ENCODE measurements at regions of chr15 and their contacts with region 1.

Region 1: DNA sequence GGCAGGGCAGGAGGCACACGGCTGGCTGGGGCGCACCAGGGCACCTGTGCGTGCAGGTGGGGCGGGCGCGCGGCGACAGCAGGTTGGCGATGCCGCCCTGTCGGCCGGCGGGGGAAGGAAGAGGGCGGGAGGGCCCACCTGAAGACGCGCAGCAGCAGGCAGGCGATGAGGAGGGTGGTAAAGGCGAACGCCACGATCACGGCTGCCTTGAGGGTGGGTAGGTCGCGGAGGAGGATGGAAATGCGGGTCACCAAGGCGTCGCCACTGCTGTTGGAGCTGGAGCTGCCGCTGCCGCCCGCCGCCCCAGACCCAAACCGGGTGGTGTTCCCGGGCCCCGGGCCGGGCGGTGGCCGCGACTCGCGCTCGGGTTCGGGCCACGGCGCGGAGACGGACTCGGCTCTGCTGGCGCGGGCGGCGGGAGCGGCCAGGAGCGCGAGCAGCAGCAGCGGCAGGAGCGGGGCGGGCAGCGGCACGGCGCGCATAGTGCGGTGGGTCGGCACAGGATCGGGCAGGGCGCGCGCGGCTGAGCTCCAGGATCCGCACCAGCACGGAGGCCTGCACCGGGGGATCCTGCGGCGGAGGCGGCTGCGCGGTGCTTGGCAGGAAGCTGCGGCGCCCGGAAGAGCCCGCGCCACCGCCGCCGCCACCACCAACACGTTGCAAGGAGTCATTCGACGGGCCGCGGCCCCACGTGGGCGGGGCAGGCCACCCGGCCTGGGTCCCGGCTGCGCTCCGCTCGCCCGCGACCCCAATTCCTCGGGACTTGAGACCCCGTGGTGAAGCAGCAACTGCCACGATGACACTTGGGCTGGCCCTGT is at the start of gene FAM174B:
- DNase-seq: no peak
- H3K4me3 ChIP-seq: peak within 1 kb of the TSS; percentile 52 to 86 (median 63)
- H3K27ac ChIP-seq: peak within 1 kb of the TSS; percentile 82 to 91
- H3K4me1 ChIP-seq: no peaks in the 10 kb centered on the region
- H3K27me3 ChIP-seq: no peaks in the 10 kb centered on the region
- CTCF ChIP-seq: peak in 1 of 3 donors; percentile 21
- POLR2A ChIP-seq: no peak
- total RNA-seq, gene FAM174B: 4.3 to 34.7 (median 20.6) TPM

Region 2: DNA sequence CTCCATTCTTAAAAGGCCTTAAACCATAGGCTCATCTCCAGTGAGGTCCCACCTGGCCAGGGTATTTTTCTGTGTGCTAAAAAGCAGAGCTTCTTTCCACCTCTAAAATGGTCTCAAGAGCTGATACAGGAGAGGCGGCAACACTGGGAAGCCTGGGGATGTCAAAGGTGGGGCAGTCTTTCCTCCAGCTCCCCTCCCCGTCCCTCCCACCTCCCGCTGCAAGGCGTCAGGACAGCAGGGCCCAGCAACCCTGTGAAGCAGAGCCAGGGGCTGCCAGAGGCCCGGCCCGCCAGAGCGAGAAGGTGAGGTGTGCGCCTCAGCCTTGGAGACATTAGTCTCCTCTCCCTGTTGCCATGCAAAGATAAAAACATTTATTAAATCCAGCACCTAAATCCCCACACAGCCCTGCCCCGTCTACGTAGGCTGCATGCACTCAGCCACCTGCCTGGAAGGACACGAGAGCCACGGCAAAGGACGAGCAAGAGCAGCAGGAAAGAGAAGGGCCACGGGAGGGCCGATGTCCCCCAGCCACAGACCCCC is 75.4 kb before region 1 on chr15:
- intact Hi-C with region 1: loop called (anchors 2 kb)
- DNase-seq: no peak
- H3K4me3 ChIP-seq: no peak overlapping the region
- H3K27ac ChIP-seq: no peak overlapping the region
- H3K4me1 ChIP-seq: no peaks in the 10 kb centered on the region
- H3K27me3 ChIP-seq: no peaks in the 10 kb centered on the region
- CTCF ChIP-seq: no peak
- POLR2A ChIP-seq: no peak

Measured in breast epithelium (tissue), 4 donors.